ENCODE measurements at regions of chr2 and their contacts with region 1.

Region 1: DNA sequence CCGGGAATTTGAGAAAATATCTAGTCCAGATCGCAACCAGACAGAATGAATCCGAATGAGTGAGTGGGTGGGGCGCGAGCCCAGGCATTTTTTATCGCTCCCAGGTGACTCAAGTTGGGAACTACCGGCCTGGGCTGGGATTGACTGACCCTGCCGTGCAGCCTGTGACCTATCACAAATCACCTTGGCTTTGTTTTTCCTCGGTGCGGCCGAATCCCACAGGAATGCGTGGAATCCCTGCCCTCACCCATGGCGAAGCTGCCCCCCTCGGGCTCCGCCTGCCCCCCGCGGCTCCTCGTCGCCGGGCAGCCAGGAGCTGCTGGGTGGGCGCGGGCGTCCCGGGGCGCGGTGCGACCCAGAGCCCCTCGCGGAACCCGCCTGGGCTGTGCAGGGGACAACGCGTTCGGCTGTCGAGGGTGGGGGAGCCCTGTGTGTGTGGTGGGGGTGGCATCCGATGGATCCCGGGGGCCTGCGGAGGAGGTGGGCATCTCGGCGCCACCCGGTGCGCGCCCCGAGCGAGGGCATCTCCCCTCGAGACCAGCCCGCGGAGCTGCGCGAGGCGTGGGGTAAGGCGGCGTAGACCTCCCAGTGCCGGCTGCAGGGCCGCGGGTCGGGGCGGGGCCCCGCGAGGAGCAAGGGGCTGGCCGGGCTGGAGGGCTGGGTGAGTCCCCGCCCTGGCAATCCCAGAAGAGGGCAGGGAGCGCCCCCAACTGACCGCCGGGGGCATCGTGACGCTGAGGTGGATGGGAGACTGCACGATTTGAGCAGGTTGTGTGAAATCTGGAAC is 16.5 kb downstream of the B3GNT7 start:
- DNase-seq: peak; percentile 93

Region 2: GRCh38 chr2:230847883-230848388 is 564.1 kb before region 1 on chr2:
- in situ Hi-C with region 1: loop called (anchors 25 kb)
- DNase-seq: peak; percentile 94

Region 3: DNA sequence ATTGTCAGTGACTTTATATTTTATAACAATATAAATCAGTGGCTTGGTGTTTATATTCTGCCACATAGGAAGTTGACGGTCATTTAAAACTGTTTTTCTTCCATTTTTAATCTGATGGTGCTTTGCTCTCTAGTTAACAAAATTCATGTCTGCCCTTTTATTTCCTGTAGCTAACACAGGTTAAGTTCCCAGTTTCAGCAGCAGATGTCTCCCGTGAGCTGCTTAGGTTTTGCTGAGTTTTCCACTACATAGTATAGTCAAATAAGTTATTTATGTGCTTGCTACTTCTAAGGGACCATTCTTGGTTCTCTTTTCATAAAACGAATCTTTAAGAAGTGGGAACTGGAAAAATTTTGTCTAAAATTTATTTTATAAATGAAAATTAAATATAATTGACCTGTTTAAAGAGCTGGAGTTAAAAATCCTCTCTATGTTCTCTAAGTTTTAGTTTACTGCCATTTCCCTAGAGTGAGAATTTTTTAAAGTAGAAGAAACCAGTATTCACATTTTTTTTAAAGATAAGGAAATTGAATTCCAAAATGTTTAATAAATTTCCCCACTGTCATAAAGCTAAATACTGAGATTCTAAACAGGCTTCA is 307.8 kb before region 1 on chr2:
- in situ Hi-C with region 1: loop called (anchors 10 kb)
- DNase-seq: peak; percentile 82

Region 4: GRCh38 chr2:231640641-231641135 is 228.7 kb after region 1 on chr2:
- in situ Hi-C with region 1: no loop called
- DNase-seq: peak; percentile 88

Region 5: GRCh38 chr2:231819447-231820042 is 407.5 kb after region 1 on chr2:
- in situ Hi-C with region 1: no loop called
- DNase-seq: no peak

Measured in KBM-7 (cell line).